Activated CD8-positive, alpha-beta T cell treated with anti-CD3 and anti-CD28 coated beads, Interleukin-2, amount 10 ng/mL, durations not matched to agents 7 days and 5 days (primary cell): ENCODE measurements at regions of chr3 and their contacts with region 1.

Region 1: DNA sequence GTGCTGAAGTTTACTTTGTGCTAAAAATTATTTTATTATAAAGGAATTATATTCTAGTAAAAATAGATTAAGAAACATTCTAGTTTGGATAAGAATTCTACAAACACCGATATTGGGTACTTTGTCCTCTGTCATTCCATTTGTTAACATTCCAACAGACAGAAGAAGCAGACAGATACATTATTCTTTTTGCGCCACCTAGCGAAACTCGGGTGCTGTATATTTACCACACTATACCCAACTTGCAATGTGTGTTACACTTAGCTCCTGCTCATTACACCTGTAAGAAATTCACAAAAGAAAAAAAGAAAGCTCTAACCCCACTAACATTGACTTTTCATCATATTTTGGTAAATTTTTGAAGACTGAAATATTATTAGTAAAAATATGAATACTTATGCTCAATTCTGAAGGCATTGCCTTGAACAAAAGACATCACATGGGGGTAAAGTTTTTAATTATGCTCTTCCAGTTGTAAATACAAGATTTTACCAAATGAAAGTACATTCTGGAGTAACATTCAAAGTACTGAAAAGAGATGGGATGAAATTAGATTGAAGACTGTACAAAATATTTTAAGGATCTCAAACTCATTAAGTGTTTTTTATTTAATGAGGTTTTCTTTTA is 136.5 kb upstream of the MLF1 start:
- DNase-seq: peak; percentile 46
- ATAC-seq: peak; percentile 53
- H3K4me3 Mint-ChIP-seq: no peak overlapping the region
- H3K27ac Mint-ChIP-seq: no peak overlapping the region
- H3K4me1 Mint-ChIP-seq: no peaks in the 10 kb centered on the region
- H3K27me3 Mint-ChIP-seq: no peaks in the 10 kb centered on the region

Region 2: GRCh38 chr3:157865352-157866000 is 569.0 kb before region 1 on chr3:
- CTCF ChIA-PET with region 1: interaction called, 17 read pairs
- POLR2A ChIA-PET with region 1: no interaction called
- DNase-seq: peak; percentile 50
- ATAC-seq: peak; percentile 69
- H3K4me3 Mint-ChIP-seq: no peak overlapping the region
- H3K27ac Mint-ChIP-seq: no peak overlapping the region
- H3K4me1 Mint-ChIP-seq: no peaks in the 10 kb centered on the region
- H3K27me3 Mint-ChIP-seq: no peaks in the 10 kb centered on the region

Region 3: DNA sequence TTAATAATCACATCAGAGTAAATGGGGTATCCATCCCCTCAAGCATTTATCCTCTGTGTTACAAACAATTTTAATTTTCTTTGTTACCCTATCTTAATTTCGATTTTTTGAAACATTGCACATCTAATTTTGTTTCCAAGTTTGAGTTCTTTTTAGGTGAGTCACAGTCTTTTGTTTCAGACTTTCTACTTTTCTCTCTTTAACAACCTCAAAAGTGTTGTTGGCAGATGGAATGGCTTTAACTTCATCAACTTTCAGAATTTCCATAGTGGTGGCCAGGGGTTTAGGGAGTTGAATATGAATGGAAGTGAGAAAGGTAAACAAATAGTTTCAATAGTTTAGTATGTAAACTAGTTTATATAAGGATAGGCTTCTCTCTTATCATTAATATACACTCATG is 86.6 kb before region 1 on chr3:
- CTCF ChIA-PET with region 1: no interaction called
- POLR2A ChIA-PET with region 1: no interaction called
- DNase-seq: no peak
- ATAC-seq: no peak
- H3K4me3 Mint-ChIP-seq: no peak overlapping the region
- H3K27ac Mint-ChIP-seq: no peak overlapping the region
- H3K4me1 Mint-ChIP-seq: no peaks in the 10 kb centered on the region
- H3K27me3 Mint-ChIP-seq: no peaks in the 10 kb centered on the region